Caco-2 (cell line): ENCODE measurements at regions of chr2 and their contacts with region 1.

Region 1: DNA sequence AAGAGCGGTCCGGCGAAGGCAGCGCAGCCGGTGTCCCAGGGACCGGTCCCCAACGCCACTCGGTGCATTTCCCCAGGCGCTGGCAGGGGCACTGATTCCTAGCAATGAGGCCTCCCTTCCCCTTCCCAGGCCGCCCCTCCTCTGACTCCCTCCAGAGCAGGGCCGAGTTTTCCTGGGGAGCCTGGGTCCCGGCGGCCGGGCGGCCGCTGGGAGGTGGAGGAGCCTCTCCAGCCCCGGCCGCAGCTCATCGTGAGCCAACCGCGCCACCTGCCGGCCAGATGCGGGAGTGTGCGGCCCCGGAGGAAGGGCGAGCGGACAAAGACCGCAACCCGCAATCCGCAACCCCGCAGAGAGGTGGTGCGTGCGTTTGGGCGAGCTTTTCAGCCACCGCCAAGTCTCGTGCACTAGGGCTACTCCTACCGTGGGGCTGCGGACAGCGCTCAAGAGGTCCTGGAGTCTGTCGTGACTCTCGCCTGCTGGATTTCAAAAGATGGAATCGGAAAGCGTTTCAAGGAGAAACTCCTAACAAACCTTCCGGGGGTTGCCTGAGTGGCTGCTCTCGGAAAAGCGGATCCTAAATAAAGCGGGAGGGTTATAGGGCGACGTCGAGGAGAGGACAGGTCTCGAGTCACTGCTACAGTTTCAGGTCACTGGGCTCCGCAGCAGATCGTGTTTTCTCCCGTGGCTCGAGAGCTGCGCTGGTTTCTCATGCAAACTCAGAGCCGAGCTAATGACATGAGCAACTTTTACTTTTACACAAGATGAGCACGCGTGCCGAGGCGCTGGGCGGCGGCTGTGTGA is 1.5 kb upstream of the EPHA4 start:
- DNase-seq: peak; percentile 92 to 98
- H3K4me3 ChIP-seq: peak overlapping the region; percentile 60
- H3K4me3 Mint-ChIP-seq: peak overlapping the region; percentile 81
- H3K27ac Mint-ChIP-seq: peak overlapping the region; percentile 38
- H3K4me1 ChIP-seq: peaks cover 31% of the 10 kb centered on the region
- H3K4me1 Mint-ChIP-seq: peaks cover 46% of the 10 kb centered on the region
- H3K27me3 ChIP-seq: no peaks in the 10 kb centered on the region
- H3K27me3 Mint-ChIP-seq: no peaks in the 10 kb centered on the region
- CTCF ChIP-seq: peak; percentile 97 to 99

Region 2: DNA sequence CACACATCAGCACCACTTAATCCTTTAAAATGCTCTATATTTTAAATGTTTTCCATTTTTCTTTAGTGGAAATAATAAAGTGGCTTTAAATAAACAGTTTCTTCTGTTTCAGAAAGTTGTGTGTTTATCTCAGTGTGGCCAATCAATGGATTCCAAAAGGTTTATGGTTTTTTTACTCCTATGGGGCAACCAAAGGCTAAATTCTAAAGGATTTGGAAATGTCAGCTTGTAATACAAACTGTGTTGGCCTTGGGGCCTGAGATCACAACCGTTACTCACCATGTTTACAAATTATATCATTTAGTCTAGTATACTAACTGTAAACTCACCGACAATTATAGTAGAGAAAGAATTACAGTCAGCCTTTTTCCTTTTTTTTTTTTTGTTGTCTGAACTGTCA is 828.8 kb before region 1 on chr2:
- CTCF ChIA-PET with region 1: interaction called, 14 read pairs
- POLR2A ChIA-PET with region 1: no interaction called
- intact Hi-C with region 1: no loop called
- DNase-seq: no peak
- H3K4me3 ChIP-seq: no peak overlapping the region
- H3K4me3 Mint-ChIP-seq: no peak overlapping the region
- H3K27ac Mint-ChIP-seq: no peak overlapping the region
- H3K4me1 ChIP-seq: no peaks in the 10 kb centered on the region
- H3K4me1 Mint-ChIP-seq: no peaks in the 10 kb centered on the region
- H3K27me3 ChIP-seq: peaks cover 1% of the 10 kb centered on the region
- H3K27me3 Mint-ChIP-seq: peaks cover 8% of the 10 kb centered on the region
- CTCF ChIP-seq: no peak

Region 3: DNA sequence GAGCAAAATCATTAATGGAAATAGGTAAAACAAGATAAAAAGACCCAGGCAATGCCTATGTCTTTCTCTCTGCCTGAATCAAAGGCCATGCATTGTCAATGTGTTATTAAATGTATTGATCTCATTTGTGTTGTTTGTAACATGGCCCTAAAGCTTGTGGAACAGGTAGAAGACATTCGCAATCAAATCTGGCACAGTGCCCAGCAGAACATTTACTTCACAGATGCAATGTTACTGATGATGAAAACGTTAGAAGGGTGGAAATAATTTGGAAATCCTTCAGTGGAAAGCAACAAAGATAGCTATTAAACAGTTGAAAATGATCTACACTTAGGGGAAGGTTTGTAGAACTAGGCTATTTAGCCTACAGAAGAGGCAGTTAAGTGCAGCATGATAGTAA is 369.8 kb before region 1 on chr2:
- CTCF ChIA-PET with region 1: interaction called, 3 read pairs
- POLR2A ChIA-PET with region 1: no interaction called
- intact Hi-C with region 1: loop called (anchors 2 kb)
- DNase-seq: no peak
- H3K4me3 ChIP-seq: no peak overlapping the region
- H3K4me3 Mint-ChIP-seq: no peak overlapping the region
- H3K27ac Mint-ChIP-seq: no peak overlapping the region
- H3K4me1 ChIP-seq: peaks cover 26% of the 10 kb centered on the region
- H3K4me1 Mint-ChIP-seq: peaks cover 9% of the 10 kb centered on the region
- H3K27me3 ChIP-seq: no peaks in the 10 kb centered on the region
- H3K27me3 Mint-ChIP-seq: no peaks in the 10 kb centered on the region
- CTCF ChIP-seq: no peak

Region 4: GRCh38 chr2:221423210-221423786 is 150.3 kb before region 1 on chr2:
- CTCF ChIA-PET with region 1: no interaction called
- POLR2A ChIA-PET with region 1: no interaction called
- intact Hi-C with region 1: loop called (anchors 5 kb)
- DNase-seq: no peak
- H3K4me3 ChIP-seq: no peak overlapping the region
- H3K4me3 Mint-ChIP-seq: no peak overlapping the region
- H3K27ac Mint-ChIP-seq: no peak overlapping the region
- H3K4me1 ChIP-seq: no peaks in the 10 kb centered on the region
- H3K4me1 Mint-ChIP-seq: no peaks in the 10 kb centered on the region
- H3K27me3 ChIP-seq: no peaks in the 10 kb centered on the region
- H3K27me3 Mint-ChIP-seq: no peaks in the 10 kb centered on the region
- CTCF ChIP-seq: no peak

Region 5: DNA sequence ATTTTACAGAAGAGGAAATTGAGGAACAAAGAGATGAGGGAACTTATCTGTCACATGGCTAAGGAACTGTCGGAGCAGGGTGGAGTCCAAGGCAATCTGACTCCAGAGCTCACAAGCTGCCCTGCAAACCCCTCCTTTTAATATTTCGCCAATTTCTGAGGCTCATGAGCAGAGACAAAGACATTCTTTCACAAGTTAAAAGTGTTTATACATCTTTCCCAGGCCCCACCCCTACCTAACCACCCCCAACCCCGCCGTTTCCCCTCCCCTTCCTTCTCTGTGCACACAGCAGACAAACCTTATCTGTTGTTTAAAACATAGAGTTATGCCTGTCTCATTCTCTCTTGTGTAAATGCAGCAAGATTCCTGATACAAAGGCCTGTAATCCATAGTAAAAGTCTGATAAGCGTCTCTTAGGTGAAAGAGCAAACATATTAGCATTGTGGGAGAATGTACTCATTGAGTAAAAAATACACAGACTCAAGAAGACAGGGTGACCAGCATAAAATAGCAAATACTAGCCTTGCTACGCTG is 45.8 kb before region 1 on chr2:
- CTCF ChIA-PET with region 1: interaction called, 8 read pairs
- POLR2A ChIA-PET with region 1: no interaction called
- intact Hi-C with region 1: loop called (anchors 1 kb)
- DNase-seq: peak; percentile 86 to 93
- H3K4me3 ChIP-seq: no peak overlapping the region
- H3K4me3 Mint-ChIP-seq: peak overlapping the region; percentile 43
- H3K27ac Mint-ChIP-seq: peak overlapping the region; percentile 39
- H3K4me1 ChIP-seq: peaks cover 55% of the 10 kb centered on the region
- H3K4me1 Mint-ChIP-seq: peaks cover 48% of the 10 kb centered on the region
- H3K27me3 ChIP-seq: no peaks in the 10 kb centered on the region
- H3K27me3 Mint-ChIP-seq: no peaks in the 10 kb centered on the region
- CTCF ChIP-seq: no peak

Region 6: DNA sequence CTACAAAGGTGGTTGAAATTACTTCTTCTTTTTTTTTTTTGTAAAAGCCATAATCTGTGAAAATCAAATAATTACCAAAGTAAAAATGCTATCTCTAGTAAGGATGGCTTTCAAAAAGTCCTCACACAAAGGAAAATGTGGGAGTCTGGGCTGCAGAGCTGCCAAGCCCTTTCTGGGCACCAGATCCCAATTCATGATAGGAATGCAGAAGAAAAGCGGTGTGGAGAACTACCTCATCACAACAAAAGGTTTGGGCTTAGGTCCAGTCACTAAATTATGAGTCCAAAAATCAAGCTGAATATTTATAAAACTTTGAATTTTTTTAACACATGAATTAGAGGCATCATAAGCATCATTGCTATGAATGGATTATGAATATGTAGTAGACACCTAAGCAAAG is 29.3 kb after region 1 on chr2:
- CTCF ChIA-PET with region 1: no interaction called
- POLR2A ChIA-PET with region 1: no interaction called
- intact Hi-C with region 1: loop called (anchors 1 kb)
- DNase-seq: no peak
- H3K4me3 ChIP-seq: no peak overlapping the region
- H3K4me3 Mint-ChIP-seq: no peak overlapping the region
- H3K27ac Mint-ChIP-seq: no peak overlapping the region
- H3K4me1 ChIP-seq: peaks cover 59% of the 10 kb centered on the region
- H3K4me1 Mint-ChIP-seq: peaks cover 21% of the 10 kb centered on the region
- H3K27me3 ChIP-seq: no peaks in the 10 kb centered on the region
- H3K27me3 Mint-ChIP-seq: no peaks in the 10 kb centered on the region
- CTCF ChIP-seq: no peak

Region 7: GRCh38 chr2:221969087-221969829 is 395.6 kb after region 1 on chr2:
- CTCF ChIA-PET with region 1: interaction called, 5 read pairs
- POLR2A ChIA-PET with region 1: no interaction called
- intact Hi-C with region 1: loop called (anchors 1 kb)
- DNase-seq: peak in 1 of 2 experiments; percentile 67
- H3K4me3 ChIP-seq: no peak overlapping the region
- H3K4me3 Mint-ChIP-seq: no peak overlapping the region
- H3K27ac Mint-ChIP-seq: no peak overlapping the region
- H3K4me1 ChIP-seq: no peaks in the 10 kb centered on the region
- H3K4me1 Mint-ChIP-seq: no peaks in the 10 kb centered on the region
- H3K27me3 ChIP-seq: no peaks in the 10 kb centered on the region
- H3K27me3 Mint-ChIP-seq: no peaks in the 10 kb centered on the region
- CTCF ChIP-seq: peak; percentile 84 to 87